Activated naive CD4-positive, alpha-beta T cell treated with anti-CD3 and anti-CD28 coated beads for 36 hours (primary cell): ENCODE measurements at regions of chr2 and their contacts with region 1.

Region 1: DNA sequence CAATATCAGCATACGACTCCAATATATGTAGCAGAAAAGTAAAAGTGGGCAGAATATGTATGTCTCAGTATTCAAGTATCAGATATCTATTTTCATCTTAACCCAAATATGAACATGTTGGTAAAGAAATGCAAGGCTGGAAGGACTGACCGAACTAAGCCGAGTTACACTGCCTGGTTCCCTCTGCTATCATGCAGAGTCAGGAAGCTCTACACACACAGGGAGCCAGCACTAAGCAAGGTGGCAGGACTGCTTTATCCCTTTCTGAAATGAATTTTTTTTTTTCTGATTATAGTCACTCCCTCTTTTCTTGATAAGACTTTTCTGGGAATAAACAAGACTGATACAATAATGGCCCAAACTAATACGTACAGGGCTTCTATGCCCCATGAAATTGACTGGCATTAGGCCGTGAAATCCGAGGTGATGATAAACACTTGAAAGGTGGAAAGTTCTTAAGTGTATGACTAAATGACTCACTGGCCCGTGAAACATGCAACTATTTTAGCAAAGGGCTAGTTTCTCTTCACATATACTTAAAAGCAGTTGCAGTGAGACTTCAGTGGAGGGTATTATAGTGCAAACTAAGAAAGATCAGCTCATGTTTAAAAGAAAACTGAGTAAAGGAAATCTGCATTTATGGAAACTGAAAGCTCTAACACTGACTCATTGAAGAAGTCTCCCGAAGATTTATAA is 14.9 kb downstream of the DPP4 start:
- DNase-seq: peak; percentile 57
- H3K4me3 Mint-ChIP-seq: peak overlapping the region; percentile 44
- H3K27ac Mint-ChIP-seq: peak overlapping the region; percentile 89
- H3K4me1 Mint-ChIP-seq: peaks cover 88% of the 10 kb centered on the region
- H3K27me3 Mint-ChIP-seq: no peaks in the 10 kb centered on the region

Region 2: DNA sequence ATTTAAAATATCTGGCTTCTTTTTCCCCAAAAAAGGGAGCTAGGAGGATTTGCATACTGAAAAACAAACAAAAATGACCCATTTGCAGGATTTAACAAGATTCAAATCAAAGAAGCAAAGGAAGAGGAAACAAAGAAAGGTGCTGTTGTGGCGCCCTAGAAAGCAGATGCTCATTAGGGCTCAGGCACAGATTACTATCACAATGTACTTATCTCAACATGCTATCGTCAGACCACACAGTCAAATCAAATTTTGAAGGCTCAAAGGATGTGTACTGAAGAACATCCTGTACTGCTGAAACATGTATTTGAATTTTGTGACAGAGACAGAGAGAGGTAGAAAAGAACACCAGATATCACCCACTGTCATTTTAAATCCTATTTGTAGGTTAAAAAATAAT is 1576.4 kb before region 1 on chr2:
- CTCF ChIA-PET with region 1: no interaction called
- intact Hi-C with region 1: loop called (anchors 10 kb)
- DNase-seq: peak; percentile 46
- H3K4me3 Mint-ChIP-seq: peak overlapping the region; percentile 47
- H3K27ac Mint-ChIP-seq: peak overlapping the region; percentile 85
- H3K4me1 Mint-ChIP-seq: peaks cover 71% of the 10 kb centered on the region
- H3K27me3 Mint-ChIP-seq: no peaks in the 10 kb centered on the region

Region 3: DNA sequence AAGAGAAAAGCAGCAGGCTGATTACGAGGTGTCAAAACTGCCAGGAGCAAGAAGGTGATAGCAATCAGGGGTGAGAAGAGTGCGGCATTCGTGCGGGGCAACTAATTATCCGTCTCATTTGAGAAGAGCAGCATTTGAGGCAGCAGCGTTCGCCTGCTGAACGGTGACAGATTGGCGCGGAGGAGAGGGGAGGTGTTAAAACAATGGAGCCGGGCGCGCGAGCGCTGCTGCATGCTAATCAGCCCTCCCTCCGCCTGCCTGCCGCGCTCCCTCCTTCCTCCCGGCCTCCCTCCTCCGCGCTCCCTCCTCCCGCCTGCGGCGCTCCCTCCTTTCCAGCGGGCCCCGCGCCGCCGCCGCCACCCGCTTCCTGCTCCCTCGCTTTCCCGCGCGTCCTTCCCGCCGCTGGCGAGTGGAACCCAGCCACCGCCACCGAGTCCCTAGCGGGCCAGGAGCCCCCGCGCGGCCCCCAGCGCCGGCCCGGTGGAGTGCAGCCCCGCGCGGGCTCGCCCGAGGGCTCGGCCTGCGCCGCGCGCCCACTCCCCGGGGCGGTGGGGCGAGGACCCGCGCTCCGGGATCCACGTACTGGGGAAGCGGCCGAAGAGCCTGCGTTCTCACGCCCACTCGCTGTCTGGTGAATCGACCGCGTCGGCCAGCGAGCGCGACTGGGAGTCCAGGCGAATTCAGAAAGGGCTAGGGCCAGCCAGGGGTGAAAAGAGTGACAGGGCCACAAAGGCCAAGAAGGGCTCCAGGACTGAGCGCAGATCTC is 820.4 kb before region 1 on chr2:
- CTCF ChIA-PET with region 1: no interaction called
- intact Hi-C with region 1: loop called (anchors 5 kb)
- DNase-seq: peak; percentile 71
- H3K4me3 Mint-ChIP-seq: peak overlapping the region; percentile 84
- H3K27ac Mint-ChIP-seq: peak overlapping the region; percentile 47
- H3K4me1 Mint-ChIP-seq: peaks cover 47% of the 10 kb centered on the region
- H3K27me3 Mint-ChIP-seq: no peaks in the 10 kb centered on the region

Region 4: GRCh38 chr2:161965994-161966393 is 93.1 kb before region 1 on chr2:
- CTCF ChIA-PET with region 1: no interaction called
- intact Hi-C with region 1: loop called (anchors 1 kb)
- DNase-seq: no peak
- H3K4me3 Mint-ChIP-seq: no peak overlapping the region
- H3K27ac Mint-ChIP-seq: no peak overlapping the region
- H3K4me1 Mint-ChIP-seq: peaks cover 28% of the 10 kb centered on the region
- H3K27me3 Mint-ChIP-seq: no peaks in the 10 kb centered on the region

Region 5: GRCh38 chr2:162013514-162014475 is 45.3 kb before region 1 on chr2:
- CTCF ChIA-PET with region 1: interaction called, 3 read pairs
- intact Hi-C with region 1: loop called (anchors 1 kb)
- DNase-seq: peak; percentile 31
- H3K4me3 Mint-ChIP-seq: peak overlapping the region; percentile 70
- H3K27ac Mint-ChIP-seq: peak overlapping the region; percentile 95
- H3K4me1 Mint-ChIP-seq: peaks cover 63% of the 10 kb centered on the region
- H3K27me3 Mint-ChIP-seq: no peaks in the 10 kb centered on the region

Region 6: GRCh38 chr2:162073888-162074645 is 14.9 kb after region 1 on chr2 and contains the start of gene DPP4:
- CTCF ChIA-PET with region 1: interaction called, 17 read pairs
- intact Hi-C with region 1: loop called (anchors 1 kb)
- DNase-seq: peak; percentile 60
- H3K4me3 Mint-ChIP-seq: peak within 1 kb of the TSS; percentile 94
- H3K27ac Mint-ChIP-seq: peak within 1 kb of the TSS; percentile 79
- H3K4me1 Mint-ChIP-seq: peaks cover 48% of the 10 kb centered on the region
- H3K27me3 Mint-ChIP-seq: no peaks in the 10 kb centered on the region
- total RNA-seq, gene DPP4: 11.9 to 12.9 TPM

Region 7: DNA sequence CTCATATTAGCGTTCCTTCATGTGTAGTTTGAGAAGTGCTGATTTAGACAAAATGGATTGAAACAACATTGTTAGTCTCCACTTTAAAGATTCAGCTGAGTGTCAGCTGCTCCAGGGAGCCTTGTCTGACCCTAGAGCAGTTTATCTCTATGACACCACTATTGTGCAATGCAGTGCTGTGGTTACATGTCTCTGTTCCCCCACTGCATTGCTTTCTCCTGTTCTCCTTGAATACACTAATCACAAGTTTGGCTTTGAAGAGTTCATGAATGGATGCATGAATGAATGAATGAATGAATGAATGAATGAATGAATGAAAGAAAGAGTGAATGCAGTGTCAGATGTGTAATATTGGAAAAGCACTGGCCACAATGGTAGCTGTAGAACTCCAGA is 54.7 kb after region 1 on chr2:
- CTCF ChIA-PET with region 1: no interaction called
- intact Hi-C with region 1: no loop called
- DNase-seq: no peak
- H3K4me3 Mint-ChIP-seq: no peak overlapping the region
- H3K27ac Mint-ChIP-seq: no peak overlapping the region
- H3K4me1 Mint-ChIP-seq: peaks cover 3% of the 10 kb centered on the region
- H3K27me3 Mint-ChIP-seq: no peaks in the 10 kb centered on the region

Region 8: DNA sequence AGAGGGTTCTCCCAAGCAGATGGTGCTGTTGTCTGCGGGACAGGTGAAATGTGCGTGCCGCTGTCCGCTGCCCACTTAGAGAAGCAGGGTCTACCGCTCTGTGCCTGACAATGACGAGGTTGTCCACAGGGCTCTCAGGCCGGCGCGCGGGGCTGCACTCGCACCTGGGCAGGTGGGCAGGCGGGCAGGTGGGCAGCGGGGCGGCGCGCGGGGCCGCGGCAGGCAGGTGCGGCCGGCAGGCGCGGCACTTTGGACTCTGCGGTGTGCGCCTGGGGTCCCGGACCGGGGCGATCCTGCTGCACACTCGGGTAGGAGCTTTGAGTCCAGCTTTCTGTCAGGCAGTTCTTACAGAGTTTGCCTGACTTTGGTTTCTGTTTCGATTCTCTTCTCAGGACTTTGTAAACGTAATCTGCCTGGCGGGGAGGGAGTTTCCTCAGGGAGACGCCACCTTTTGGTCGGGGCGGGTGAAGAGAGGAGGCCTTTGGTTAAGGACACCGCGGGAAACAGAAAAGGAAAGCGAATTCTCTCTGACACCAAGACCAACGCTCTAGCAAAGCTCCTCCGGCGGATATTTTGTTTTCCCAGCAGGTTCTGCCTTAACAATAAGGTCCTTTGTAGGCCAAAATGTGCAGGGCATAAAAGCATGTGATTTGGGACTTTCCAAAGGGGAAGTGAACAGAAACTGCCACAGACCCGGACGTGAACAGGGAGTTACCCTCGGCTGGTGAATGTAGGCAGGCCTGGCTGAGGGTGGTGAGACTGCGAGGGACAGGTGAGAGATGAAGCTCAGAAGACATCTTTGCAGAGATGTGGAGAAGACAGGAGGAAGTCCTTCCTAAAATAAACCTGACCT is 259.4 kb after region 1 on chr2 and contains the start of gene IFIH1:
- CTCF ChIA-PET with region 1: no interaction called
- intact Hi-C with region 1: loop called (anchors 1 kb)
- DNase-seq: peak; percentile 88
- H3K4me3 Mint-ChIP-seq: peak within 1 kb of the TSS; percentile 94
- H3K27ac Mint-ChIP-seq: peak within 1 kb of the TSS; percentile 98
- H3K4me1 Mint-ChIP-seq: peaks cover 52% of the 10 kb centered on the region
- H3K27me3 Mint-ChIP-seq: no peaks in the 10 kb centered on the region
- total RNA-seq, gene IFIH1: 33.8 to 34.6 TPM